ENCODE measurements at regions of chr19 and their contacts with region 1.

Region 1: DNA sequence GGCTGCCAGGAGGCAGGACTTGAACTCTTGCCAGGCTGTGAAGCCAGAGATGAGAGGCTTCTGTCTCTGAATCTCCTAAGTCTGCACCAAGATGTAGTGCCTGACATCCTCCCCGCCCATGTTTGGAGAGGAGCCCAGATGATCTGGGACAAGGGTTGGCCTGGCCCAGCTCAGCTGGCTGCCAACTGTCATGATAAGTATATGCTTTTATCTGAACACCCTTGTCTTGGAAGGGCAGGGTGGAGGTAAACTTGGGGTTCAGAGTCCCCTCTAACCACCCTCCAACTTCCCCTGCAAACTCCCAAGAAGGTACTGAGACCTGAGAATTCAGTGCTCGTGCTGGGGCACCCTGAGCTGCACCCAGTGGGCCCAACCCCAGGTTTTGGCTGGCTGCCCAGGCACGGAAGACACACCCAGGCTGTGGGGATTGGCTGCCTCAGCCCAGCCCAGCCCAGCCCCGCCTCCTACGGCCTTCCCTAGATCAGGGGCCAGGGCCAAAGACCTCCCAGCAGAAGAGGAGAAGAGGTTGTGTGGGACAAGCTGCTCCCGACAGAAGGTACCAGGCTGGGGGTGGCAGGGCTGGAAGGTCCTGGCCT is at the start of gene CYP4F12:
- DNase-seq: peak; percentile 93
- ATAC-seq: peak; percentile 98
- total RNA-seq, gene CYP4F12: 5.8 TPM

Region 2: DNA sequence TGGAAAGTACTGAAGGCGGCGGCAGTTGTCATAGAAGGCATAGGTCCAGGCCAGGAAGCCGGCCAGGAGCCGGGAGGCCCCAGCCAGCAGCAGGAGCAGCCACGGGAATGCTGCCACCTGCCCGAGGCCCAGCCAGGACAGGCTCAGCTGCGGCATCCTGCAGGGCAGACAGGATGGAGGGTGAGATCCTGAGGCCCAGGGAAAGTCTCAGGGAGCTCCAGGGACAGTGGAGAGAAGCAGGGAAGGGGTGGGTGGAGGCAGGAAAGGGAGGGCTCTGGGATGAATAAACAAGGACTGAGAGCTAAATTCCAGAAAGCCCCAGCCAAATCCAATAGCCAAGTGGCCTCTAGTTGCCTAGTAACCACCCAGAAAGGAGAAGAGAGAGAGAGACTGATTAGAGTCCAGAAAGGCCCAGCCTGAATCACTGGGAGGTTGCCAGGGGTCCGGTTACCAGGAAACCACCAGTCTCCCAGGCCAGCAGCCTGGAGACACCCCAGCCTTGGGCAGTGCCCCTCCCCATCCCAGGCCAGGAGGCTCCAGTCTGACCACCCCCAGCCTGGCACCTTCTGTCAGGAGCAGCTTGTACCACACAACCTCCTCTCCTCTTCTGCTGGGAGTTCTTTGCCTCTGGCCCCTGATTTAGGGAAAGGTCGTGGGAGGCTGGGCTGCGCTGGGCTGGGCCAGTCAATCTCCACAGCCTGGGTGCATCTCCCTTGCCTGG is 107.2 kb after region 1 on chr19:
- intact Hi-C with region 1: loop called (anchors 5 kb)
- DNase-seq: peak; percentile 82
- ATAC-seq: peak; percentile 93

Measured in Right ventricle myocardium inferior (tissue), 1 donor.